ENCODE measurements at regions of chr12 and their contacts with region 1.

Region 1: GRCh38 chr12:12513416-12514006 is 49.2 kb downstream of the DUSP16 start:
- DNase-seq: no peak
- H3K4me3 Mint-ChIP-seq: no peak overlapping the region
- H3K27ac Mint-ChIP-seq: no peak overlapping the region
- H3K4me1 Mint-ChIP-seq: peaks cover 22% of the 10 kb centered on the region
- H3K27me3 Mint-ChIP-seq: no peaks in the 10 kb centered on the region

Region 2: GRCh38 chr12:12376646-12377448 is 136.7 kb before region 1 on chr12:
- intact Hi-C with region 1: no loop called
- DNase-seq: no peak
- H3K4me3 Mint-ChIP-seq: no peak overlapping the region
- H3K27ac Mint-ChIP-seq: peak overlapping the region; percentile 59
- H3K4me1 Mint-ChIP-seq: peaks cover 34% of the 10 kb centered on the region
- H3K27me3 Mint-ChIP-seq: no peaks in the 10 kb centered on the region

Region 3: GRCh38 chr12:12486661-12487240 is 26.8 kb before region 1 on chr12:
- intact Hi-C with region 1: loop called (anchors 2 kb)
- DNase-seq: no peak
- H3K4me3 Mint-ChIP-seq: no peak overlapping the region
- H3K27ac Mint-ChIP-seq: peak overlapping the region; percentile 80
- H3K4me1 Mint-ChIP-seq: peaks cover 51% of the 10 kb centered on the region
- H3K27me3 Mint-ChIP-seq: no peaks in the 10 kb centered on the region

Region 4: GRCh38 chr12:12527820-12528296 is 14.3 kb after region 1 on chr12:
- intact Hi-C with region 1: loop called (anchors 2 kb)
- DNase-seq: no peak
- H3K4me3 Mint-ChIP-seq: no peak overlapping the region
- H3K27ac Mint-ChIP-seq: peak overlapping the region; percentile 81
- H3K4me1 Mint-ChIP-seq: peaks cover 32% of the 10 kb centered on the region
- H3K27me3 Mint-ChIP-seq: no peaks in the 10 kb centered on the region